ENCODE measurements at regions of chr1 and their contacts with region 1.

Region 1: GRCh38 chr1:145845514-145846161 is at the start of gene NUDT17:
- DNase-seq: peak; percentile 90
- H3K4me3 ChIP-seq: peak within 1 kb of the TSS; percentile 33 to 61 (median 54)
- H3K27ac ChIP-seq: peak within 1 kb of the TSS; percentile 75 to 85 (median 79)
- H3K4me1 ChIP-seq: peaks cover 0 to 14% (median 13%) of the 10 kb centered on the region in 4 donors
- H3K27me3 ChIP-seq: no peaks in the 10 kb centered on the region
- CTCF ChIP-seq: peak; percentile 79 to 91 (median 86)
- EP300 ChIP-seq: no peak
- POLR2A ChIP-seq: peak in 1 of 2 donors; percentile 16
- total RNA-seq, gene NUDT17: 1.6 to 9.1 (median 2.8) TPM

Region 2: GRCh38 chr1:145782166-145783099 is 63.2 kb before region 1 on chr1:
- intact Hi-C with region 1: loop called (anchors 10 kb)
- DNase-seq: no peak
- H3K4me3 ChIP-seq: peak overlapping the region in 3 of 4 donors; percentile 24 to 42 (median 37)
- H3K27ac ChIP-seq: peak overlapping the region; percentile 67 to 84 (median 76)
- H3K4me1 ChIP-seq: peaks cover 0 to 56% (median 31%) of the 10 kb centered on the region in 4 donors
- H3K27me3 ChIP-seq: no peaks in the 10 kb centered on the region
- CTCF ChIP-seq: no peak
- EP300 ChIP-seq: no peak
- POLR2A ChIP-seq: no peak

Region 3: DNA sequence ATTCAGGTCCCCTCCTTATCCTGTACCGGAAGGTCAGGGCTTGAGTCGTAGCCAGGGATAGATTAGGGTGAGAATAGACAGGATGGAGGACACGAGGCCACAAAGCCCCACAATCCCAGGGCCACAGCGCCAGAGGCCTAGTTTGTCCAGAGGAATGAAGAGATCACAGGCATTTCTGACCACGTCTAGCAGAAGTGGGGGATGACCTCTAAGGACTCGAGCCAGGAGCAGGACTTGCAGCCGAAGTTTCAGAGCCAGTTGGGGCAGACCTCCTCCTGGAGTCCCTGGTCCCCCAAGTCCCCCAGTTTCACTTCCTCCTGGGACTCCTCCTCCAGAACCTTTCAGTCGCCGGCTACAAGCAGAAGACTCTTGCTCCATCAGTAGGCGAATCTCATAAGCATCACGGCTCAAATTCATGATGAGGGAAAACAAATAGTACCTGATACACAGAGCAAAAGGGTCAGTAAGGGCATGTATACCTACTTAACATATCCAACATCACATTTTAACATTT is 66.5 kb after region 1 on chr1:
- intact Hi-C with region 1: loop called (anchors 5 kb)
- DNase-seq: no peak
- H3K4me3 ChIP-seq: no peak overlapping the region
- H3K27ac ChIP-seq: no peak overlapping the region
- H3K4me1 ChIP-seq: peaks cover 0 to 14% (median 11%) of the 10 kb centered on the region in 4 donors
- H3K27me3 ChIP-seq: no peaks in the 10 kb centered on the region
- CTCF ChIP-seq: no peak
- EP300 ChIP-seq: no peak
- POLR2A ChIP-seq: no peak

Region 4: GRCh38 chr1:147313250-147313649 is 1467.6 kb after region 1 on chr1:
- intact Hi-C with region 1: no loop called
- DNase-seq: no peak
- H3K4me3 ChIP-seq: no peak overlapping the region
- H3K27ac ChIP-seq: no peak overlapping the region
- H3K4me1 ChIP-seq: no peaks in the 10 kb centered on the region
- H3K27me3 ChIP-seq: no peaks in the 10 kb centered on the region
- CTCF ChIP-seq: no peak
- EP300 ChIP-seq: no peak
- POLR2A ChIP-seq: no peak